ENCODE measurements at regions of chr2 and their contacts with region 1.

Region 1: DNA sequence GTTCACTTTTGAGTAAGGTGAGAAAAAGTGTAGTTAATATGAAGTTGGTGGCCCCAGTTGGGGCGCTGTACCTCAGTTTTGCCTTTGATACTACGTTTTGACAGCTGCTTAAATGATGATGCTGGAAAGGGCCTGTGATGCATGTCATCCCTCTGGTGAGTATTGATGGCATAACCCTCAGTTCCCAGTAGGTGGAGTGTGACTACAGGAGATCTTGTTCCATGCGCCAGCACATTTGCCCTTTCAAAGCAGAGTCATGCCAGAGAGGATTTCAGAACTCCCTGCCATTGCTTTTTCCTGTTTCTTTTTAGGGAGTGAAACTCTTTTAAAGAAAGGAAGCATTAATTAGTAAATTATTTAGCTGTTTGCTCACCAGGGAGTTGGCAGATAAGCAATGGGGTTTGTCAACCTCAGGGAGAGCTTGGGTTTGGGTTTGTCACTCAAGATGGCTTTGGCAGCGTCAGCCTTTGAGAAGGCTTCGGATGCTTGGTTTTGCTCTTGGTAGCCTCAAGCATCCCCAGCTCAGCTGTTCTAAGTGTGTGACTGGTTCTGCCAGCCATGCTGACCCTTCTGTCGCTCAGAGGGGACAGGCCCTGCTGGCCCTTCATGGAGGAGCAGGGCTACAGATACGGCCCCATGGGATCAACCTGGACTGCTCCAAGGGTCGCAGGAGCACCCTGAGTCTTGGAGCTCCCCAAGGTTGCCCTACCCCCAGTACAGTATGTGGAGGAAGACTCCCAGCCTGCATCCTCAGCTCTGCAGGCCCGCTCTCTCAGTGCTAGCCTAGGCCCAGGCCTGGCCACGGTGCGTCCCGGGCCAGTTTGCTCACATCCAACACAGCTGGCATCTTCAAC is 29.1 kb downstream of the ARMC9 start:
- DNase-seq: peak; percentile 70
- ATAC-seq: peak; percentile 80
- H3K4me3 ChIP-seq: no peak overlapping the region
- H3K27ac ChIP-seq: peak overlapping the region; percentile 80
- H3K4me1 ChIP-seq: peaks cover 29% of the 10 kb centered on the region
- H3K27me3 ChIP-seq: no peaks in the 10 kb centered on the region
- CTCF ChIP-seq: peak; percentile 82 to 90 (median 89)
- EP300 ChIP-seq: no peak
- POLR2A ChIP-seq: no peak; the same call in 1 of the 2 replicates
- RAD21 ChIP-seq: peak; percentile 93

Region 2: DNA sequence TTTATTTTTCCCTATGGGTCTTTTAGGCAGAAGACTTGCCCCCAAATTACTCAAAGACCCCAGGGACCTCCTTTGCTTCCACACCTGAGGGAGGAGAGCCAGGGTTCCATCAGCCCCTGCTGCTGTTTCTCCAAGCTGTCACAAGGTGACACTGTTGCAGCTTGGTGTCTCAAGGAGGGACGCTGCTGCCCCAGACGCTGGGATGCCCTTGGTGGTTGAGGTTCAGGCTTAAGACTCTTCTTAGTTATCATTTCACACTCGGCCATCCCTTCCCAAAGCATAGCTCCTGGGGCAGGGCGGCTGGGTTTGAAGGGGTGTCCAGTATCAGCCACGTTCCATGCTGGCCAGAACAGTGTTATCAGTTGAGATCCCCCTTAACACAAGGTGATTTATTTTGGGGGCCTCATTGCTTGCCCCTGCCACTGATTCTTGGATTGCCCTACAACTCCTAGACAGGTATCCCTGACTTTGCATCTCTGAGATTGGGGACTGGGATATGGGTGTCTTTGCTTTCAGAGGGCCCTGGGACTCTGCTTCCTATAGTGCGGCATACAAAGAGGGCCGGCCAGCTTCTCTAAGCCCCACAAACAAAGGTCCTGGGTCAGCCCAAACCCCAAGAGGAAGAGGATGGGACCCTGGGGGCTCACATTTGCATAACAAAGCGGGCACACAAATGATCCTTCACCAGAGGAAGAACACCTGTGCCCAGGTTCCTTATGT is 325.2 kb before region 1 on chr2:
- CTCF ChIA-PET with region 1: no interaction called
- POLR2A ChIA-PET with region 1: no interaction called
- RAD21 ChIA-PET with region 1: no interaction called
- SMC1A ChIA-PET with region 1: no interaction called
- in situ Hi-C with region 1: no loop called
- intact Hi-C with region 1: no loop called
- DNase-seq: no peak
- ATAC-seq: peak; percentile 94
- H3K4me3 ChIP-seq: no peak overlapping the region
- H3K27ac ChIP-seq: no peak overlapping the region
- H3K4me1 ChIP-seq: peaks cover 14% of the 10 kb centered on the region
- H3K27me3 ChIP-seq: no peaks in the 10 kb centered on the region
- CTCF ChIP-seq: peak; percentile 98 to 99 (median 98); a peak in 5 of 6 replicates
- EP300 ChIP-seq: no peak
- POLR2A ChIP-seq: no peak
- RAD21 ChIP-seq: peak; percentile 99

Region 3: DNA sequence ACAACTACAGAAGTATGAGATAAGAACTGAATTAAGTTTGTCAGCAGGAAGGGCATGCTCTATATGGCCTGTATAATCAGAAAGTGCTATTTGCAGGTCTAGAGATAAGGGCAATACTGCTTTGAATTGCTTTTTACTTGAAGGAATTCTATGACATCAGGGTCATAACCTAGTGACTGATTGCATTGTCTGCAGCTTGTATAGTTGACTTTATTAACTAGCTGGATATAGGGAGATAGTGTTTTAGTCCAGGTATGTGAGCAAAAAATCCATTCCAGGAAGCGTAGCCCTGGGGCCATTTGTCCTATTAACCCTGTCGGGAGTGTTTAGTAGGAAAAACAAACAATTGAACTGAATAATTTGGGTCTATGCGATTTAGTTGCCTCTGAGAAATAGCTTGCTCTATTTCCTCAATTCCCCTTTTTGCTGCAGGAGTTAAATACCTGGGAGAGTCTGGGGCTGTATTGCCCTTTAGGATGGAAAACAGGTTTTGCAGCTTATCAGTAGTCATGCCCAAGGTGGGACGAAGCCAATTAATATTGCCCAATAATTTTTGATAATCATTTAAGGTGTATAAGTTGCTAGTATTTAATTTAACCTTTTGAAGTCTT is 132.7 kb before region 1 on chr2:
- CTCF ChIA-PET with region 1: no interaction called
- POLR2A ChIA-PET with region 1: no interaction called
- RAD21 ChIA-PET with region 1: no interaction called
- SMC1A ChIA-PET with region 1: no interaction called
- in situ Hi-C with region 1: no loop called
- intact Hi-C with region 1: no loop called
- DNase-seq: no peak
- ATAC-seq: no peak
- H3K4me3 ChIP-seq: no peak overlapping the region
- H3K27ac ChIP-seq: no peak overlapping the region
- H3K4me1 ChIP-seq: no peaks in the 10 kb centered on the region
- H3K27me3 ChIP-seq: no peaks in the 10 kb centered on the region
- CTCF ChIP-seq: no peak
- EP300 ChIP-seq: no peak
- POLR2A ChIP-seq: no peak
- RAD21 ChIP-seq: no peak

Region 4: DNA sequence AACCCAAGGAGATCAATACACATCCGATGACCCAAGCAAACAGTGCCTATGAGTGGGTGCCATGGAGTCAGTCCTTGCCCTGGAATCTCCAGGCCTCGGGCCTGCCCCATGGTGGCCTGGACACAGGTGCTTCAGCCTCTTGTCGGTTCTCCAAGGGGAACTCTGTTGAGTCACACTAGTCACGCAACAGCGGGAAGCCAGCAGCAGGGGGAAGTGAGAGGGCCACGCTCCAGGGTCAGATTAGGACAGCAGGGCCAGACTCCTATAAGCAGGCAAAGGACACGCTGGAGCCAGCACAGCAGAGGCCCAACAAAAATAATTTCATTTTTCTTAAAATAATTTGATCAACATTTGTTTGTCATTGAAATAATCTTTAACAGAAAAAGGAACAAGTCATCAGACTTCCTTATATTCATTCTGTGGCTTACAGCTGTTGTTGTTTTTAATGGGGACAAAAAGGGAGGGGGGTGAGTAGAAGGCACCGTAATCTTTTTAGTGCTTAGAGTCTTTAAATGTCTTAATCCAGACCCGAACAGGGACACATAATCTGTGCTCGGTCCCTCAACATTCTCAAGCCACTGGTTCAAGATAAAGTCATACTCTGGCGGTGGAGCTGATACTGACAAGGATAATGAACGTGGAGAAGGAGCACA is 45.5 kb before region 1 on chr2:
- CTCF ChIA-PET with region 1: interaction called, 5 read pairs
- POLR2A ChIA-PET with region 1: interaction called, 4 read pairs
- RAD21 ChIA-PET with region 1: interaction called, 13 read pairs
- SMC1A ChIA-PET with region 1: interaction called, 18 read pairs
- in situ Hi-C with region 1: no loop called
- intact Hi-C with region 1: loop called (anchors 2 kb)
- DNase-seq: peak; percentile 52
- ATAC-seq: peak; percentile 75
- H3K4me3 ChIP-seq: peak overlapping the region; percentile 34; the same call in 1 of the 2 replicates
- H3K27ac ChIP-seq: peak overlapping the region; percentile 81
- H3K4me1 ChIP-seq: peaks cover 48% of the 10 kb centered on the region
- H3K27me3 ChIP-seq: no peaks in the 10 kb centered on the region
- CTCF ChIP-seq: no peak
- EP300 ChIP-seq: peak; percentile 23 to 75; a peak in 3 of 4 replicates
- POLR2A ChIP-seq: 0 out of 2 replicates have a peak, but pooled peaks have one; percentile 22
- RAD21 ChIP-seq: no peak

Region 5: GRCh38 chr2:231245253-231246094 is 17.9 kb after region 1 on chr2:
- CTCF ChIA-PET with region 1: interaction called, 29 read pairs
- POLR2A ChIA-PET with region 1: no interaction called
- RAD21 ChIA-PET with region 1: interaction called, 6 read pairs
- SMC1A ChIA-PET with region 1: interaction called, 19 read pairs
- in situ Hi-C with region 1: no loop called
- intact Hi-C with region 1: no loop called
- DNase-seq: no peak
- ATAC-seq: peak; percentile 85
- H3K4me3 ChIP-seq: no peak overlapping the region
- H3K27ac ChIP-seq: no peak overlapping the region
- H3K4me1 ChIP-seq: no peaks in the 10 kb centered on the region
- H3K27me3 ChIP-seq: no peaks in the 10 kb centered on the region
- CTCF ChIP-seq: peak in 2 of 3 experiments; percentile 31 to 48; a peak in 3 of 6 replicates
- EP300 ChIP-seq: no peak
- POLR2A ChIP-seq: no peak
- RAD21 ChIP-seq: peak; percentile 30; the same call in 1 of the 2 replicates

Region 6: GRCh38 chr2:231308631-231309428 is 81.3 kb after region 1 on chr2:
- CTCF ChIA-PET with region 1: interaction called, 10 read pairs
- POLR2A ChIA-PET with region 1: no interaction called
- RAD21 ChIA-PET with region 1: interaction called, 3 read pairs
- SMC1A ChIA-PET with region 1: interaction called, 6 read pairs
- in situ Hi-C with region 1: no loop called
- intact Hi-C with region 1: no loop called
- DNase-seq: no peak
- ATAC-seq: no peak
- H3K4me3 ChIP-seq: no peak overlapping the region
- H3K27ac ChIP-seq: no peak overlapping the region
- H3K4me1 ChIP-seq: peaks cover 7% of the 10 kb centered on the region
- H3K27me3 ChIP-seq: no peaks in the 10 kb centered on the region
- CTCF ChIP-seq: no peak
- EP300 ChIP-seq: no peak
- POLR2A ChIP-seq: no peak
- RAD21 ChIP-seq: no peak

Region 7: DNA sequence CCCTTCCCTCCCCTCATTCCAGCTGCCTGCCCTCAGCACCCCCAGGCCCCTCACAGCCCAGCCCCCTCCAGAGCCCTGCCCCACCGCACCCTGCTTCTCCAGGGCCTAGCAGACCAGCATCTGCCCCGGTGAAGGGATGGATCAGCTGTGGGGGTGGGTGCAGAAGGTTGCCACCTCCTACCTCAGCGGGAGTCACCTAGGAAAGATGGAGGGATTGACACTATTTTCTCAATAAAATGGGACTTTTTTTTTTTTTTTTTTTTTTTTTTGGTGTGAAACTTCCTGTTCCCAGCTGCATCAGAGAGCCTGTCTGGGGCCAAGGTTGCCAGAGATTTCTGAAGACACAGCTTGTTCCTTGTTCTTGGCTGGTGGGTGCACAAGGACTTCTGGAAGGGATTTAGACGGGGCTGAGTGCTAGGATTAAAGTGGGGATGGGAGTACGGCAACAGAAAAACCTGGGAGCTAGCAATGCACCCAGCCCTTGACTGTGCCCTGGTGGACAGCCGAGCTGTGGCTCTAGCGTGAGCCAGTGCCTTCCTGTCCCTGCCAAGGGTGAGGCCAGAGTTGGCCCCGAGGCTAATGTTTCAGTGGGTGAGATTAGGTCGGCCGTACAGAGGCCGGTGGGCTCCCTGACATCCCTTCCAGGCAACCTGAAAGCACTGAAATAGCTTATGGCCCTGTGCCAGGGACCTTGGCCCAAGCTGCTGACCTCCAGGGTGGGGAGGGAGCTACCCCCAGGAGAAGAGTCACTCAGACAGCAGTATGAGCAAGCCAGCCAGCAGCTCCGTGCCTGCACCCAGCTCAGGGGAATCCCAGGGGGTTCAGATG is 172.5 kb after region 1 on chr2:
- CTCF ChIA-PET with region 1: interaction called, 234 read pairs
- POLR2A ChIA-PET with region 1: no interaction called
- RAD21 ChIA-PET with region 1: interaction called, 52 read pairs
- SMC1A ChIA-PET with region 1: interaction called, 66 read pairs
- in situ Hi-C with region 1: no loop called
- intact Hi-C with region 1: loop called (anchors 1 kb)
- DNase-seq: no peak
- ATAC-seq: peak; percentile 46
- H3K4me3 ChIP-seq: no peak overlapping the region
- H3K27ac ChIP-seq: no peak overlapping the region
- H3K4me1 ChIP-seq: peaks cover 22% of the 10 kb centered on the region
- H3K27me3 ChIP-seq: no peaks in the 10 kb centered on the region
- CTCF ChIP-seq: no peak
- EP300 ChIP-seq: no peak
- POLR2A ChIP-seq: no peak
- RAD21 ChIP-seq: no peak

Region 8: DNA sequence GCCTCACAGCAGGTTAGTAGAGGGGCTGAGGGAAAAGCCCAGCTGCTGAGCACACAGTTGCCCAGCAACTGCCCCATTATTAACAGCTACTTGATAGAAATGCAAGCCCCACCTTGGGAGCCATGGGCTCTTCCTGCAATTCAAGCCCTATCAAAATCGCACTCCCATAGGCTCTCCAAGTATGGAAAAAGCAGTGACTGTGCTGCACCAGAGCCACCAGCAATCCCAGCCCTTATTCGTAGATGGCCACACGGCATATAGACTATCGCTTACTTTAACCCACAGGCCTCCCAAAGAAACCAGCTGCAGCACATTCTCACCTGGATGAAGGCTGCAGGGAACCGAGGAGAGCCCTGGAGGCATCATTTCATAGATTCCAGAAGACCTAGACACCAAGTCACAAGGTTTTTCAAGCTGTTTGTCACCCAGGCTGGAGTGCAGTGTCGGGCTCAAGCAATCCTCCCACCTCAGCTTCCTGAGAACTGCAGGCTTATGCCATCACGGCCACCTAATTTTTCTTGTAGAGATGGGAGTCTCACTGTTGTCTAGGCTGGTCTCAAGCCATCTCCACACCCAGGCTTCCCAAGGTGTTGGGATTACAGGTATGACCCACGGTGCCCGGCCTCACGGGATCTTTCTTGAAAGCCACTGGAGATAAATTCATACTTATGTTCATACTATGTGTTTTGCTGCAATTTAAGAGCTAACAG is 225.4 kb after region 1 on chr2:
- CTCF ChIA-PET with region 1: interaction called, 63 read pairs
- POLR2A ChIA-PET with region 1: interaction called, 3 read pairs
- RAD21 ChIA-PET with region 1: interaction called, 59 read pairs
- SMC1A ChIA-PET with region 1: interaction called, 25 read pairs
- in situ Hi-C with region 1: no loop called
- intact Hi-C with region 1: loop called (anchors 1 kb)
- DNase-seq: no peak
- ATAC-seq: peak; percentile 13
- H3K4me3 ChIP-seq: no peak overlapping the region
- H3K27ac ChIP-seq: no peak overlapping the region
- H3K4me1 ChIP-seq: no peaks in the 10 kb centered on the region
- H3K27me3 ChIP-seq: no peaks in the 10 kb centered on the region
- CTCF ChIP-seq: no peak
- EP300 ChIP-seq: no peak
- POLR2A ChIP-seq: peak; percentile 65
- RAD21 ChIP-seq: no peak